Natural killer cell (primary cell): ENCODE measurements at regions of chr1 and their contacts with region 1.

Region 1: DNA sequence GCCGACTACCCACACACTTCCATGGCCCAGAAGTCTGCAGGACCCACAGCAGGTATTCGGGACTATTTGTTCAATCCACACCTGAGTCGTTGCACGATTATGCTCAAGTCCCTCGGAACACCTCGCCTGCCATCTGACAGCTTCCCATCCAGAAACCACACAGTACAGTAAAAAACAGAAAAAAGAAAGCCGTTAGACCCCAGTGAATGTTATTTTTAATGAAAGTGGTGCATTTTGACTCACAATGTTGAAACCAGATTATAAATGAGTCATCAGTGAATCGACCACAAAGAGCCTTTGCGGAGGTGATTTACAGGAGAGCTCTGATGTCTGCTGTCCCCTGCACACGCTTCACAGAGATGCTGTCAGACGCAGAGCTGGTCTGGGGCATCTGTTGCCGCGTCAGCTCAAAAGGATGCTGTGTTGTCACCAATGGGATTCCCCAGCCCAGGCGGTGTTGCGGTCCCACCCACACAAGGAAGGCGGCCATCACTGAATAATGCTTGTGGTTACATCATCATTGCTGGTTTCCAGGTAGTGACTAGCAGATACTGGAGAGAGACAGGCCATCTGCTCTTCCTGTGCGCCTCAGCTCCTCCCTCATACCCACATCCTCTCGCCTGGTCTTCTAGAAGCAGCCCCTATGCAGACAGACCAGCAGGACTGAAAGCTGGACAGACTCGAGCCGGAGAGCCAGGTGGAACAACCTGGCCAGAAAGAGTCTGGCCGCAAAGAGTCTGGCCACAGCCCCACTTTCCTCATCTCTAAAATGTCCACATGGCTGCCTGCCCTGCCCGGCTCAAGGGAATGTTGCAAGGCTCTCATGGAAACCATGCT is 116.8 kb downstream of the TOMM20 start:
- DNase-seq: peak; percentile 90 to 99
- ATAC-seq: peak; percentile 88 to 97 (median 92)
- H3K4me3 ChIP-seq: peak overlapping the region; percentile 21
- H3K4me3 Mint-ChIP-seq: peak overlapping the region; percentile 86
- H3K27ac ChIP-seq: peak overlapping the region; percentile 89
- H3K27ac Mint-ChIP-seq: peak overlapping the region; percentile 91 to 95
- H3K4me1 ChIP-seq: peaks cover 28% of the 10 kb centered on the region
- H3K4me1 Mint-ChIP-seq: peaks cover 37 to 49% of the 10 kb centered on the region in 2 donors
- H3K27me3 ChIP-seq: no peaks in the 10 kb centered on the region
- H3K27me3 Mint-ChIP-seq: no peaks in the 10 kb centered on the region
- CTCF ChIP-seq: no peak

Region 2: DNA sequence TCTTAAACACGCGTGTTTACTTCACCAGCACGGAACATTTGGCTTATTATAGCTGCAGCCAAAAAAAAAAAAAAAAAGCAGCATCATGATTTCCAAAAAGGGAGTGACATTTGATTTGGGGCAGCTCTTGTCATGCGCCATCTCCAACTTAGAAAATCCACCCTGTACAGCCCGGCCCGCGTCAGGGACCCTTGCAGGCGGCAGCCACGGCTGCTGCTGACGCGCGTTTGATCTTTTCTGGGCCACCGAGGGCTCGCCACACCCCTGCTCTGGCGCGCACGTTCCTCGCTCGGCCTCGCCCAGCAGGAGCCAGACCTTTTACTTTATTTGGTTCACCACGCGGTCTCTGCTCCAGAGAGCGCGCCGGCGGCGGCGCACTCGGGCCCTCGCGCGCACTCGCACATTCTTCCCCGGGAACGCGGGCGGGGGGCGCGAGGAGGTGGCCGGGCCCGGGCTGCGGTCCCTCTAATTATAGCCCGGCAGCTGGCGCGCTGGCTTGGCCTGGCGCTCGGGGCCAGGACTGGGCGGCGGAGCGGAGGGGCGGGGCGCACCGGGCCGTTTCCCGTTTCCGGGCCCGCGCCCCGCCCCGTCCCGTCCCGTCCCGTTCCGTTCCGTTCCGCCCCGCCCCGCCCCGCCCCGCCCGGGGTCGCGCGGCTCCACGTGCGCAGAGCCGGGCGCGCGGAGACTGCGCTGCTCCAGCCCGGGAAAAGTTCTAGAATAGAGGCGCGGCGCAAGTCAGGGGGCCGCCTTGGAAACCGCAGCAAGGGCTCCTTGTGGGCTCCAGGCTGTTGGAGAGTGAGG is 412.0 kb before region 1 on chr1:
- intact Hi-C with region 1: loop called (anchors 2 kb)
- DNase-seq: peak; percentile 61 to 90
- ATAC-seq: peak; percentile 68 to 87 (median 79)
- H3K4me3 ChIP-seq: peak overlapping the region; percentile 48
- H3K4me3 Mint-ChIP-seq: peak overlapping the region; percentile 87
- H3K27ac ChIP-seq: peak overlapping the region; percentile 95
- H3K27ac Mint-ChIP-seq: peak overlapping the region; percentile 97 to 99
- H3K4me1 ChIP-seq: peaks cover 33% of the 10 kb centered on the region
- H3K4me1 Mint-ChIP-seq: peaks cover 46 to 48% of the 10 kb centered on the region in 2 donors
- H3K27me3 ChIP-seq: no peaks in the 10 kb centered on the region
- H3K27me3 Mint-ChIP-seq: no peaks in the 10 kb centered on the region
- CTCF ChIP-seq: no peak

Region 3: GRCh38 chr1:234755449-234755863 is 256.4 kb before region 1 on chr1:
- intact Hi-C with region 1: loop called (anchors 5 kb)
- DNase-seq: no peak
- ATAC-seq: peak in 1 of 3 donors; percentile 45
- H3K4me3 ChIP-seq: no peak overlapping the region
- H3K4me3 Mint-ChIP-seq: no peak overlapping the region
- H3K27ac ChIP-seq: no peak overlapping the region
- H3K27ac Mint-ChIP-seq: no peak overlapping the region
- H3K4me1 ChIP-seq: peaks cover 25% of the 10 kb centered on the region
- H3K4me1 Mint-ChIP-seq: peaks cover 9 to 26% of the 10 kb centered on the region in 2 donors
- H3K27me3 ChIP-seq: no peaks in the 10 kb centered on the region
- H3K27me3 Mint-ChIP-seq: peaks cover 13 to 32% of the 10 kb centered on the region in 2 donors
- CTCF ChIP-seq: no peak

Region 4: DNA sequence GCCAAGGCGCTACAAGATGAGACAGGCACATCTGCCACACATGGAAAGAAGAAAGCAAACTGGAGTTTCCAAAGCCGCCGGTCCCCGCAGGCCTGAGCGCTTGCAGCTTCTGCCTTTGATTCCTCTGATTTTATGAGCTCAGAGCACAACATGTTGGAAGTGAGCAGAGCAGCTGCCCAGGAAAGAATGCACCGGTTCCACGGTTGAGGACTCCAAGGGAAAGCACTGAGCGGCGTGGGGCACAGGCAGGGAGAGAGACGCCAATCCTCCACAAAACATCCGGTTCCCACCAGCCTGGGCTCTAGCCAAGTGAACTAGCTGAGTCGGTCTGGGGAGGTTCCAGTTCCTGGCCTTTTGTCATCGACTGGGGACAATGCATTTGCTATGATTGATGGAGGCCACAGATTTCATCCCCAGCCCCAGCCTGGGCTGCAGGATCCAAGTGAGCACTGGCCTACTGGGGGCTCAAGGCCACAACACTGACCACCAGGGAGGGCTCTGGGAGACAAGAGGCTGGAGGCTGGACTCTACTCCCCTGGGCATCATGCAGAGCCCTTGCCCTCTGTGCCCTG is 148.8 kb before region 1 on chr1:
- intact Hi-C with region 1: loop called (anchors 2 kb)
- DNase-seq: no peak
- ATAC-seq: no peak
- H3K4me3 ChIP-seq: no peak overlapping the region
- H3K4me3 Mint-ChIP-seq: no peak overlapping the region
- H3K27ac ChIP-seq: no peak overlapping the region
- H3K27ac Mint-ChIP-seq: peak overlapping the region in 1 of 2 donors; percentile 24
- H3K4me1 ChIP-seq: peaks cover 24% of the 10 kb centered on the region
- H3K4me1 Mint-ChIP-seq: peaks cover 19 to 23% of the 10 kb centered on the region in 2 donors
- H3K27me3 ChIP-seq: no peaks in the 10 kb centered on the region
- H3K27me3 Mint-ChIP-seq: peaks cover 5 to 10% of the 10 kb centered on the region in 2 donors
- CTCF ChIP-seq: no peak

Region 5: DNA sequence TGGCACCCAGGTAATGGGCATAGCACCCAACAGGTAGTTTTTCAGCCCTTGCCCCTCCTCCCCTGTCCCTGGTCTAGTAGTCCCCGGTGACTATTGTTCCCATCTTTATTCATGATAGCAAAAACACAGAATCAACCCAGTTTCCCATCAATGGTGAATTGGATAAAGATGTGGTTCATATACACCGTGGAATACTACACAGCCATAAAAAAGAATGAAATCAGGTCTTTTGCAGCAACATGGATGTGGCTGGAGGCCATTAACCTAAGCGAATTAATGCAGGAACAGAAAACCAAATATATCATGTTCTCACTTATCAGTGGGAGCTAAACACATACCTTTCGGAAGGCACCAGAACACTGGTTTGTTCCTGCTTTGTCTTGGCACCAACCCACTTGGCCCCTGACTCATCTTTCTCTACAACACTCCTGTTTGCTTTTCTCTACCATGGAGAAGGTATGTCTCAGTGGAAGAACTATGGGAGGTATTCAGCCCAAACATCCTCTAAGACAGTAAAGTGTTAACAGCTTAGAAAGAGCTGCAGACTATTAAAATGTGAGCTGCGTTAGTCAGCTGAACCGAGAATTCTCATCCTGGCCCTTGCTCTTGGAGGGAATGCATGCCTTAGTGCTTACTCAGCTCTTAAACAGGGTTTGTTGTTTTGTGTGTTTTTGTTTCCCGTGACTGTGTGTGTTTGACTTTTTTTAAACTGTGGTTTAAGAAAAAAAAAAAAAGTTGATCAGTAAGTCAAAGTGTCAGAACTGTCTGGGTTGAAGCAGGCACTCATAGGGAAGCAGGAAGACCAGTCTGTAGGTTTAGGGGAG is 86.2 kb before region 1 on chr1:
- intact Hi-C with region 1: loop called (anchors 5 kb)
- DNase-seq: peak in 1 of 2 donors; percentile 64
- ATAC-seq: peak; percentile 28 to 50 (median 46)
- H3K4me3 ChIP-seq: no peak overlapping the region
- H3K4me3 Mint-ChIP-seq: peak overlapping the region; percentile 84
- H3K27ac ChIP-seq: peak overlapping the region; percentile 68
- H3K27ac Mint-ChIP-seq: peak overlapping the region; percentile 86 to 92
- H3K4me1 ChIP-seq: peaks cover 37% of the 10 kb centered on the region
- H3K4me1 Mint-ChIP-seq: peaks cover 34 to 35% of the 10 kb centered on the region in 2 donors
- H3K27me3 ChIP-seq: no peaks in the 10 kb centered on the region
- H3K27me3 Mint-ChIP-seq: peaks cover 0 to 5% of the 10 kb centered on the region in 2 donors
- CTCF ChIP-seq: no peak

Region 6: DNA sequence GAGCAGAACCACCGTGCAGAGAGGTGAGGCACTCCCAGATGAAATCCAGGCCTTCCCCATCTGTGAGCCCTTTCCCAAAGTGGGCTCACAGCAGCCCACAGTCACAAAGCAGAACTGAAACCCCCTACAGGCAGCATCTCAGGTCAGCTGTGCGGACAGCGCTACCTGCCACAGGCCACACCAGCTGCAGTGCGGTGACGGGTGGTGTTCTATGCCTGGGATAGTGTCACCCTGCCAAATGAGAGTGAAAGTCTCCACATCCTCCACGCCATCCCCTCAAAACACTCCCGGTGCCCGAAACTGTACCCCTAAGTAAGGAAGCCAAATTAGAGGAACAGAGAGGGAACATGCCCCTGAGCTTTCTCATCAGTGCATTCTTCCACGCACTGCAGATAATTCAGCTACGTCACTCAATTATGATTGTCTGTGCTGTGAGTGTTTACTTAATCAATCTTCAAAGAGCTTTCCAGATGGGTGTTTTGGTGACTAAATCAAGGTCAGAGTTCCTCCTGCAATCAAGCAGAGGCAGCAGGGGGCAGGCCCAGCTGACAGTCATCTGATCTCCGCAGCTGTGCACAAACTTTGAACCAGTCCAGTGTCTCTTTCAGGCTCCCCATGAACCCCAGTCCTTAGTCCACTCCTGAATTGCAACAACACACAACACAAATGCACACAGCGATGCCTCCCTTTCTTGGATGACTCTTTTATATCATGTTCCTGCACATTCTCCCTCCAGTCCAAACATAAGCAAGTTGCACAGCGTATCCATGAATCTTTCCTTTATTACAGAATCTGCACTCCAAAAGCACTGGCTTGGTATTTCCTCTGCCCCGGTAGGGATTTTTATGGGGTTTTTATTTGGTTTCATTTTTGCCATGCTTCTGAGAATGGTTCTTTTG is 33.2 kb before region 1 on chr1:
- intact Hi-C with region 1: loop called (anchors 5 kb)
- DNase-seq: peak in 1 of 2 donors; percentile 79
- ATAC-seq: peak; percentile 12 to 42 (median 25)
- H3K4me3 ChIP-seq: no peak overlapping the region
- H3K4me3 Mint-ChIP-seq: peak overlapping the region; percentile 2
- H3K27ac ChIP-seq: peak overlapping the region; percentile 75
- H3K27ac Mint-ChIP-seq: peak overlapping the region; percentile 20 to 86
- H3K4me1 ChIP-seq: peaks cover 55% of the 10 kb centered on the region
- H3K4me1 Mint-ChIP-seq: peaks cover 37 to 39% of the 10 kb centered on the region in 2 donors
- H3K27me3 ChIP-seq: no peaks in the 10 kb centered on the region
- H3K27me3 Mint-ChIP-seq: peaks cover 4 to 7% of the 10 kb centered on the region in 2 donors
- CTCF ChIP-seq: no peak

Region 7: GRCh38 chr1:235075188-235075926 is 63.5 kb after region 1 on chr1:
- intact Hi-C with region 1: loop called (anchors 5 kb)
- DNase-seq: peak; percentile 53 to 58
- ATAC-seq: peak; percentile 80 to 92 (median 82)
- H3K4me3 ChIP-seq: no peak overlapping the region
- H3K4me3 Mint-ChIP-seq: peak overlapping the region; percentile 26
- H3K27ac ChIP-seq: no peak overlapping the region
- H3K27ac Mint-ChIP-seq: peak overlapping the region; percentile 57 to 65
- H3K4me1 ChIP-seq: peaks cover 37% of the 10 kb centered on the region
- H3K4me1 Mint-ChIP-seq: peaks cover 11 to 20% of the 10 kb centered on the region in 2 donors
- H3K27me3 ChIP-seq: no peaks in the 10 kb centered on the region
- H3K27me3 Mint-ChIP-seq: no peaks in the 10 kb centered on the region
- CTCF ChIP-seq: no peak

Region 8: GRCh38 chr1:235093696-235094592 is 82.1 kb after region 1 on chr1:
- intact Hi-C with region 1: no loop called
- DNase-seq: peak; percentile 77 to 90
- ATAC-seq: peak; percentile 95 to 99 (median 99)
- H3K4me3 ChIP-seq: no peak overlapping the region
- H3K4me3 Mint-ChIP-seq: no peak overlapping the region
- H3K27ac ChIP-seq: no peak overlapping the region
- H3K27ac Mint-ChIP-seq: no peak overlapping the region
- H3K4me1 ChIP-seq: peaks cover 8% of the 10 kb centered on the region
- H3K4me1 Mint-ChIP-seq: peaks cover 7% of the 10 kb centered on the region in 2 donors
- H3K27me3 ChIP-seq: no peaks in the 10 kb centered on the region
- H3K27me3 Mint-ChIP-seq: peaks cover 7 to 8% of the 10 kb centered on the region in 2 donors
- CTCF ChIP-seq: peak; percentile 92

Region 9: GRCh38 chr1:235286667-235287066 is 274.9 kb after region 1 on chr1:
- intact Hi-C with region 1: no loop called
- DNase-seq: no peak
- ATAC-seq: peak in 2 of 3 donors; percentile 25 to 37
- H3K4me3 ChIP-seq: no peak overlapping the region
- H3K4me3 Mint-ChIP-seq: peak overlapping the region; percentile 11
- H3K27ac ChIP-seq: no peak overlapping the region
- H3K27ac Mint-ChIP-seq: peak overlapping the region; percentile 67 to 72
- H3K4me1 ChIP-seq: peaks cover 39% of the 10 kb centered on the region
- H3K4me1 Mint-ChIP-seq: peaks cover 63 to 71% of the 10 kb centered on the region in 2 donors
- H3K27me3 ChIP-seq: no peaks in the 10 kb centered on the region
- H3K27me3 Mint-ChIP-seq: no peaks in the 10 kb centered on the region
- CTCF ChIP-seq: no peak